ENCODE measurements at regions of chr19 and their contacts with region 1.

Region 1: GRCh38 chr19:55605207-55605636 is 225 bp upstream of the ZNF865 start:
- DNase-seq: peak; percentile 100
- H3K4me3 Mint-ChIP-seq: peak overlapping the region; percentile 86
- H3K27ac Mint-ChIP-seq: peak overlapping the region; percentile 96
- H3K4me1 Mint-ChIP-seq: peaks cover 52% of the 10 kb centered on the region
- H3K27me3 Mint-ChIP-seq: no peaks in the 10 kb centered on the region

Region 2: DNA sequence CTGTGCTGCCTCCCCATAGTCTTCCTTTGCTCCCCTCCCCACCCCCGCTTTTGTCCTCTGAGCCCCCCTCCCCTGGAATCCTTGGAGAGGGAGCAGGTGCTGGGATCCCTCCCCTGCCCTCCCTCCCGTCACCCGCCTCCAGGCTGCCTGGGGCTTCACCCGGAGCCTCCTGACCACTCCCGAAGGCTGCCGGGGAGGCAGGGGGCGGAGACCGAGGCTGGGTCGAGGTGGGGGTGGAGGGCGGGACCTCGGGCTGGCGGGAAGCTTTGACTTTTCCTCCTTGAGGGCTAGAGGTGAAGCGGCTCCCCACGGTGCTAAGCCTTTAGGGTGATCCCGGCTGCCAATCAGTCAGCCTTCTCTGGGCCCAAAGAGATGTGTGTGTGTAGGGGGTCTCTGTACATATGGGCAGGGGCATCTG is 264.0 kb before region 1 on chr19:
- CTCF ChIA-PET with region 1: no interaction called
- intact Hi-C with region 1: no loop called
- DNase-seq: peak; percentile 86
- H3K4me3 Mint-ChIP-seq: peak overlapping the region; percentile 90
- H3K27ac Mint-ChIP-seq: peak overlapping the region; percentile 27
- H3K4me1 Mint-ChIP-seq: peaks cover 12% of the 10 kb centered on the region
- H3K27me3 Mint-ChIP-seq: no peaks in the 10 kb centered on the region

Region 3: GRCh38 chr19:55407800-55408532 is 197.3 kb before region 1 on chr19:
- CTCF ChIA-PET with region 1: no interaction called
- intact Hi-C with region 1: loop called (anchors 1 kb)
- DNase-seq: peak; percentile 98
- H3K4me3 Mint-ChIP-seq: peak overlapping the region; percentile 93
- H3K27ac Mint-ChIP-seq: peak overlapping the region; percentile 96
- H3K4me1 Mint-ChIP-seq: peaks cover 27% of the 10 kb centered on the region
- H3K27me3 Mint-ChIP-seq: no peaks in the 10 kb centered on the region

Region 4: GRCh38 chr19:55476100-55476775 is 129.0 kb before region 1 on chr19 and contains the start of gene ZNF628:
- CTCF ChIA-PET with region 1: interaction called, 3 read pairs
- intact Hi-C with region 1: loop called (anchors 1 kb)
- DNase-seq: peak; percentile 99
- H3K4me3 Mint-ChIP-seq: peak within 1 kb of the TSS; percentile 90
- H3K27ac Mint-ChIP-seq: peak within 1 kb of the TSS; percentile 90
- H3K4me1 Mint-ChIP-seq: peaks cover 30% of the 10 kb centered on the region
- H3K27me3 Mint-ChIP-seq: no peaks in the 10 kb centered on the region
- total RNA-seq, gene ZNF628: 6.0 to 6.1 TPM

Region 5: GRCh38 chr19:55580628-55581144 is 24.5 kb before region 1 on chr19 and contains the start of gene ZNF579:
- CTCF ChIA-PET with region 1: interaction called, 12 read pairs
- intact Hi-C with region 1: no loop called
- DNase-seq: peak; percentile 89
- H3K4me3 Mint-ChIP-seq: peak within 1 kb of the TSS; percentile 76
- H3K27ac Mint-ChIP-seq: peak within 1 kb of the TSS; percentile 72
- H3K4me1 Mint-ChIP-seq: peaks cover 27% of the 10 kb centered on the region
- H3K27me3 Mint-ChIP-seq: no peaks in the 10 kb centered on the region
- total RNA-seq, gene ZNF579: 6.1 to 6.5 TPM

Region 6: DNA sequence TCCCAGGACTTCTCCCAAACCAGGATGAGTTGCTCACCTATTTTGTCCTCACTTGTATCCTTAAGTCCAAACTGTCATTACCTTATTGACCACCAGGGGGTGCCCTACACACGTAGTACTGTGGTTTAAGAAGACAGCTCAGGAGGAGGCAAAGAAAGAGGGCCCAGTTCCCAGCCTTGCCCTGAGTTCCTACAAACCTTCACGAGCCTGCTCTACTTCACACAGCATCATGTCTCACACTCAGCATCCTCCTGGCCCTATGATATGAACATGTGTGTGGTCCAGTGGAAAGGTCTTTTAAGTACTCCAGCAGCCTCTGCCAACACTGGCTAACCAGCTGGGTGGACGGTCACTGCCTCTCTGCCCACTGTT is 27.2 kb after region 1 on chr19:
- CTCF ChIA-PET with region 1: interaction called, 41 read pairs
- intact Hi-C with region 1: no loop called
- DNase-seq: peak; percentile 98
- H3K4me3 Mint-ChIP-seq: no peak overlapping the region
- H3K27ac Mint-ChIP-seq: peak overlapping the region; percentile 60
- H3K4me1 Mint-ChIP-seq: peaks cover 36% of the 10 kb centered on the region
- H3K27me3 Mint-ChIP-seq: no peaks in the 10 kb centered on the region

Region 7: GRCh38 chr19:55753401-55753800 is 148.2 kb after region 1 on chr19:
- CTCF ChIA-PET with region 1: no interaction called
- intact Hi-C with region 1: no loop called
- DNase-seq: no peak
- H3K4me3 Mint-ChIP-seq: no peak overlapping the region
- H3K27ac Mint-ChIP-seq: no peak overlapping the region
- H3K4me1 Mint-ChIP-seq: no peaks in the 10 kb centered on the region
- H3K27me3 Mint-ChIP-seq: peaks cover 4% of the 10 kb centered on the region

Region 8: DNA sequence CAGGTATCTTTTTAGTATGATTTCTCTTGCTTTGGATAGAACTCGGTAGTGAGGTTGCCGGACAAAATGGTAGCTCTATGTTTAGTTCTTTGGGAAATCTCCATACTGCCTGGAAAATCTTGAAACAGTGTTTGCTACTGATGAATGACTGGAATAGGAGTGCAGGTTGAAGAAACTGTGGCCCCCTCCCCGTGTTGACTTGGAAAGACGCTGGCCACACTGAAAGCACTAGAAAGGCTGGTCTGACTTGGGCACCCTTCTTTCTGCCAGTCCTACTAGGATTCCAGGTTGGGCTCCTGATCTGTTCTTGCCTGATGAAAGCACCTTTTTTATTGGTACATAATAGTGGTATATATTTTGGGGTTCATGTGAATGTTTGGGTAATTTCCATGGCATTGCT is 277.4 kb after region 1 on chr19:
- CTCF ChIA-PET with region 1: no interaction called
- intact Hi-C with region 1: no loop called
- DNase-seq: no peak
- H3K4me3 Mint-ChIP-seq: no peak overlapping the region
- H3K27ac Mint-ChIP-seq: no peak overlapping the region
- H3K4me1 Mint-ChIP-seq: no peaks in the 10 kb centered on the region
- H3K27me3 Mint-ChIP-seq: peaks cover 3% of the 10 kb centered on the region

Region 9: DNA sequence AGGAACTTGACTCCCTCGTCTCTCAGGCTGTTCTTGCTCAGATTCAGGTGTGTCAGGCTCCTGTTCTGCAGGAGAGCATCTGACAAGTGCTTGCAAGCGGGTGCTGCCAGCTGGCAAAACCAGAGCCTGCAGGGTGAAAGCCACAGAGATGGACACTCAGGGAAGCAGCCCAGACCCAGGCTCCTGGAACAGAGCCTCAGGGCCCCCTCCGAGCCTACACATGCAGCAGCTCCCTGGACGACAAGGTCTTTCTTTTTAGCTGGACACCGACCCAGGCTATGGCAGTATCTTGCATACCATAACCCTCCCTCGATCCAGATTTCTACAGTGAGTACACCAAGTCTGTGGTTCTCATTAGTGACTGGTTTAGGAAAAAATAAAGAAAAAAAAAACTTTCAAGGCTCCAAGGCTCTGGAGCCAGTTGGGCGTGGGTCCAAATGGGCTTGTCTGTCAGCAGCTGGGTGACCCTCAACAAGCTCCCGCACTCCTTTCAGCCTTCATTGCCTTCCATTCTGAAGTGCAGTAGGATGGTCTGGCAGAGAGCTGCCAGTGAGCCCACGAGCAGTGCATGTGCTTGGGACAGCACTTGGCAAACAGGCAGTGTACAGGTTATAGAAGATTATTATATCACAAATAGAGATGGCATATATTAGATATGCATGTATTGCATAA is 297.0 kb after region 1 on chr19:
- CTCF ChIA-PET with region 1: no interaction called
- intact Hi-C with region 1: no loop called
- DNase-seq: no peak
- H3K4me3 Mint-ChIP-seq: no peak overlapping the region
- H3K27ac Mint-ChIP-seq: no peak overlapping the region
- H3K4me1 Mint-ChIP-seq: no peaks in the 10 kb centered on the region
- H3K27me3 Mint-ChIP-seq: no peaks in the 10 kb centered on the region

Measured in activated naive CD4-positive, alpha-beta T cell treated with anti-CD3 and anti-CD28 coated beads for 36 hours (primary cell).